ENCODE measurements at regions of chr1 and their contacts with region 1.

Region 1: GRCh38 chr1:110872745-110873720 is at the start of gene CD53:
- DNase-seq: peak; percentile 64
- H3K4me3 Mint-ChIP-seq: peak within 1 kb of the TSS; percentile 97
- H3K27ac Mint-ChIP-seq: peak within 1 kb of the TSS; percentile 97
- H3K4me1 Mint-ChIP-seq: peaks cover 34% of the 10 kb centered on the region
- H3K27me3 Mint-ChIP-seq: no peaks in the 10 kb centered on the region
- total RNA-seq, gene CD53: 657 to 659 TPM

Region 2: GRCh38 chr1:110630839-110631663 is 242.0 kb before region 1 on chr1:
- CTCF ChIA-PET with region 1: no interaction called
- POLR2A ChIA-PET with region 1: interaction called, 19 read pairs
- DNase-seq: peak; percentile 92
- H3K4me3 Mint-ChIP-seq: no peak overlapping the region
- H3K27ac Mint-ChIP-seq: no peak overlapping the region
- H3K4me1 Mint-ChIP-seq: peaks cover 68% of the 10 kb centered on the region
- H3K27me3 Mint-ChIP-seq: no peaks in the 10 kb centered on the region

Region 3: DNA sequence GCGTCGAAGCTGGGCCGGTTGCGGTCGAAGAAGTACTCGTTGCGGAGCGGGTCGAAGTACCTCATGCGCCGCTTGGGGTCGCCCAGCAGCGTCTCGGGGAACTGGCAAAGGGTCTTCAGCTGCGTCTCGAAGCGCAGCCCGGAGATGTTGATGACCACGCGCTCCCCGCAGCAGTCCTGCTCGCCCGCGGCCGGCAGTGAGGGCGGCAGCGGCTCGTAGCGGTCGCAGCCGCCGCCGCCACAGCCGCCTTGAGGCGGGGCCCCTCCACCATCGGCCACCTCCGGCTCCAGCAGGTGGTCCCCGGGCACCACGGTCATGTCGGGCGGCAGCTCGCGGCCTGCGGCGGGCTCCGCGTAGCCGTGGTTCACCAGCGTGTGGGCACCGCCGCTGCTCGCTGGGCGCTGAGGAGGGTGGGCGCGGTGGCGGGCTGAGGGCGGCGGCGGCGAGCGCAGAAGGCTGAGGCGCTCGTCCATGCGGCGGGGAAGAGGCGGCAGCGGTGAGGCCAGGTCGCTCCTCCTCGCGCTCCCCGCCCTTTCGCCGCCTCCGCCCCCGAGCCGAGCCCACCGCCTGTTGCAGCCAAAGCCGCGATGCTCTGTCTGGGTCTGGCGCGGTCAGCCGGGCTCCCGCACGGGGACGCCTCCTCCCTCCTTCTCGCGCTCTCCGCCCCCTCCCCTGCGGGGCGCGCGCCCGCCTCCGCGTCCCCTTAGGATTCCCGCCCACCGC is 198.5 kb before region 1 on chr1 and contains the start of gene KCNA3:
- CTCF ChIA-PET with region 1: no interaction called
- POLR2A ChIA-PET with region 1: interaction called, 166 read pairs
- DNase-seq: peak; percentile 74
- H3K4me3 Mint-ChIP-seq: peak within 1 kb of the TSS; percentile 100
- H3K27ac Mint-ChIP-seq: peak within 1 kb of the TSS; percentile 89
- H3K4me1 Mint-ChIP-seq: peaks cover 28% of the 10 kb centered on the region
- H3K27me3 Mint-ChIP-seq: no peaks in the 10 kb centered on the region
- total RNA-seq, gene KCNA3: 84.9 to 86.2 TPM

Region 4: DNA sequence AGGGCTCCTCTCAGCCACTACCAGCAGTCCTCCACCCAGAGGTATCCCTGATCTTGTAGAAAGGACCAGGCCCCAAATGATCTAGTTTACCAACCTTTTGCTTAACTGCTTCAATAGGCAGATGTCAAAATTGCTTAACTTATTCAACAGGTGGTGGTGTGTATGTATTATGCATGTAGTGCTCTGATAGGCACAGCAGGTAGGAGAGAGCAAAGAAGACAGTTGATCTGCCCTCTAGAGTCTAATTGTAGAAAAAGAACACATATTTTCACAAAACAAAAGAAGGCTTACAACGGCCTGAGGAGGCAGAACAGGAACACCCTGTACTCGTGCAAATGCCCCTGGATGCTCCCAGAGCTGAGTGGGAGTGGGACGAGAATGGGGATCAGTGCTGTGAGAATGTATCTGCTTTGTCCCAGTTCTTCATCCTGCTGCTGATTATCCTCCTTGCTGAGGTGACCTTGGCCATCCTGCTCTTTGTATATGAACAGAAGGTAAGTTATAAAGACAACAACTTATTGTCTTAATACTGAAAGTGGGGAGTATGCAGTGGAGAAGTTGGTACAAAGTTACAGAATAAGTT is 21.0 kb after region 1 on chr1:
- CTCF ChIA-PET with region 1: interaction called, 3 read pairs
- POLR2A ChIA-PET with region 1: interaction called, 136 read pairs
- DNase-seq: no peak
- H3K4me3 Mint-ChIP-seq: no peak overlapping the region
- H3K27ac Mint-ChIP-seq: no peak overlapping the region
- H3K4me1 Mint-ChIP-seq: peaks cover 96% of the 10 kb centered on the region
- H3K27me3 Mint-ChIP-seq: no peaks in the 10 kb centered on the region

Region 5: DNA sequence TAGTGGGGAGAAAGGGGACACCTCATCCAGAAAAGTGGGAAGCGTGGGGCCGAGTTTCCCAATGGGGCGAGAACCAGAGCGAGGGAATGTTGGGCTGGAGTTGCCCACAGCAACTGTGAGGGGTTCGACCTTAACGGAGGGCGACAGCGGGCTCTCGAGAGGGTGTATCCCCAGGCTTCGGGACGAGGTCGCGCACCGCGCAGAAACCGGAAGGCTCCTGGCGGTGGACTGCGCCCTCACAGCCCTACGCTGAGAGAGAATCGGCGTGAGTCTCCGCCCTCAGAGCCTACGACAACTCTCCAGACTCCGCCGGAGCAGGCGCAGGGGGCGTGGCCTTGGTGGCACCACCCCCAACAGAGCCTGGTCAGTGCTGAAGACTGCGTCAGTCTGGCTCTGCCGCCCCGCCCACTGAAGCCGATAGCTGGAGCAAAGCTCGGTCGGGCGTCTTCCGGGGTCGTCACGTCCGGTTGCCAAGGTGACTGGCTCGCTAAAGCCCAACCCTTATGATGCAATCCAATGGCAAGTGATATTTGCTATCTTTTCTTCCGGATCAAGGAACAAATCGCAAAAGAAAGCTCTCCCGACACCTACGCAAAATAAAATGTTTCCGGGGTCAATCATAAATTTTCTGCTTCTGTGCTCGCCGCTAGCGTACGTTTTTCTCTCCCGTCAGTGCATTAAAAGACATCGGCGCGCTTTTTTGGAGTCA is 90.8 kb after region 1 on chr1 and contains the start of gene LRIF1:
- CTCF ChIA-PET with region 1: interaction called, 14 read pairs
- POLR2A ChIA-PET with region 1: interaction called, 62 read pairs
- DNase-seq: peak; percentile 100
- H3K4me3 Mint-ChIP-seq: peak within 1 kb of the TSS; percentile 85
- H3K27ac Mint-ChIP-seq: peak within 1 kb of the TSS; percentile 98
- H3K4me1 Mint-ChIP-seq: peaks cover 39% of the 10 kb centered on the region
- H3K27me3 Mint-ChIP-seq: peaks cover 14% of the 10 kb centered on the region
- total RNA-seq, gene LRIF1: 25.7 to 26.9 TPM

Region 6: GRCh38 chr1:111214074-111214801 is 341.2 kb after region 1 on chr1:
- CTCF ChIA-PET with region 1: no interaction called
- POLR2A ChIA-PET with region 1: interaction called, 24 read pairs
- DNase-seq: no peak
- H3K4me3 Mint-ChIP-seq: peak overlapping the region; percentile 52
- H3K27ac Mint-ChIP-seq: peak overlapping the region; percentile 97
- H3K4me1 Mint-ChIP-seq: peaks cover 73% of the 10 kb centered on the region
- H3K27me3 Mint-ChIP-seq: no peaks in the 10 kb centered on the region

Measured in activated CD4-positive, alpha-beta memory T cell treated with anti-CD3 and anti-CD28 coated beads, Interleukin-2, amount 10 ng/mL, durations not matched to agents 7 days and 5 days (primary cell).